ENCODE measurements at regions of chr10 and their contacts with region 1.

Region 1: GRCh38 chr10:13776861-13777311 is 190.1 kb downstream of the PRPF18 start:
- DNase-seq: no peak
- H3K4me3 ChIP-seq: no peak overlapping the region
- H3K27ac ChIP-seq: no peak overlapping the region
- H3K4me1 ChIP-seq: no peaks in the 10 kb centered on the region
- H3K27me3 ChIP-seq: no peaks in the 10 kb centered on the region
- CTCF ChIP-seq: no peak
- POLR2A ChIP-seq: no peak

Region 2: DNA sequence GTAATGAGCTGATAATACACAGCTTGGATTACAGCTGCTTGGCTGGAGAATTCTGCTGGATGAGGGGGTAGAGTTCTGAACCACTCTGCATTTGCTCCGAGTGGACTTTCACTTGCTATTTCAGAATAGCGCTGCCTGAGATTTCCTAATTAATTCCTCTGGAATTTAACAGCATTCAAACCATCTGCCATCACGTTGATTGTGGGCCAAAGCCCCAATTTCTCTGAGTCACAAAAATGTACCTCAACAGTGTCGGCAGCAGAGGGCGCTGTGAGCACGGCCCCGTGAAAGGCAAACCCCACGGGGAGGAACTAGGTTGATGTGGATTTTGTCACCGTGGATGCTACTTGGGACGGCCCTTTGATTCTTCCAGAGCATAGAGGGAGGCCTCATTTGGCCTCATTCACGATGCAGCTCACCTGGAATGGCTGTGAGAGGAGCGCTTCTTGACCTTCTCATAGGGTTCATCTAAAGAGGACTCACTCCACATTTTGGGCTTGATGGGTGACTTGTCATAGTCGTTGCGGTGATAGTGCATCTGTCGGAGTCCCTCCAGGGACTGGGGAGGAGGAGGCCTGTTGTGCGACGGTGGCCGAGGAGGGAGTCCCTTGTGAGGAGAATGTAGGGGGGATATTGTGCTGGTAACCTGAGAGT is 116.9 kb before region 1 on chr10:
- intact Hi-C with region 1: loop called (anchors 2 kb)
- DNase-seq: peak; percentile 50 to 72
- H3K4me3 ChIP-seq: no peak overlapping the region
- H3K27ac ChIP-seq: peak overlapping the region in 1 of 3 donors; percentile 7
- H3K4me1 ChIP-seq: no peaks in the 10 kb centered on the region
- H3K27me3 ChIP-seq: no peaks in the 10 kb centered on the region
- CTCF ChIP-seq: peak; percentile 72 to 92 (median 87)
- POLR2A ChIP-seq: no peak